A549 (cell line): ENCODE measurements at regions of chr2 and their contacts with region 1.

Region 1: GRCh38 chr2:74391580-74392448 is 11.7 kb upstream of the DCTN1 start:
- DNase-seq: peak; percentile 87 to 95
- ATAC-seq: peak; percentile 88 to 92
- H3K4me3 ChIP-seq: peak overlapping the region; percentile 72
- H3K27ac ChIP-seq: peak overlapping the region; percentile 85 to 93
- H3K4me1 ChIP-seq: peaks cover 24% of the 10 kb centered on the region
- CTCF ChIP-seq: peak; percentile 99
- EP300 ChIP-seq: no peak
- POLR2A ChIP-seq: peak; percentile 78
- RAD21 ChIP-seq: peak; percentile 48 to 61; a peak in 4 of 5 replicates

Region 2: DNA sequence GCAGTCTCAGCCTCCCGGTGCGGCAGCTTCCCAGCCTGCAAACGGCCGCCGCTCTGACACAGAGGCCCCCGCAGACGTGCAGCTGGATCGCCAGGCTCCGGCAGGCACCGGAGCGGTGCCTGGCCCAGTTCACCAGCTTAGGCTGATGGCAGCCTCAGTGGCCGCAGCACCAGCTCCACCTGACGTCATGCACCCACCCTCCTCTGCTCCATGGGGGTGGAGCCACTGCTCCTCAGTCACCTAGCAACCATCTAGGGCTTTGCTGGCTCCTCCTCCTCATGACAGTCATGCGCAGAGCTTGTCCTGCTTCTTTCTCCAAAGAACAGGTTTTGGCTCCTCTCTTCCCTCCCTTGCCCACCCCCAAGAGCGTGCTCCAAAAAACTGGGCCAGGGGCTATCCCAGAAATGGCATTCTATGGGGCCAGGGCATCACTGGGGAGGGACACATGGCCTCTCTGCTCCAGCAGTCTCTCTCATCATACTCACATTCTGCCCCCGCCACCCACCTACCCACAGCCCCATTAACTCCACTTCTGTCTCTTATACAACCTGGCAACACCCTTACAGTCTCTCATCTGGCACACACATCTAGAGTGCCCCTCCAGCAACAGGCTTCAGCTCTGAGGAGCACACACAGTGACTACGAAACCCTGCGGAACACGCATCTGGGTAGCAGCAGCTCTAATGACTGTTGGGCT is 17.2 kb before region 1 on chr2:
- CTCF ChIA-PET with region 1: interaction called, 14 read pairs
- POLR2A ChIA-PET with region 1: no interaction called
- DNase-seq: peak in 1 of 2 experiments; percentile 7
- ATAC-seq: peak in 1 of 2 experiments; percentile 64; a peak in 3 of 6 replicates
- H3K4me3 ChIP-seq: no peak overlapping the region
- H3K27ac ChIP-seq: no peak overlapping the region
- H3K4me1 ChIP-seq: peaks cover 4% of the 10 kb centered on the region; the same call in 1 of the 3 replicates
- CTCF ChIP-seq: no peak
- EP300 ChIP-seq: no peak
- POLR2A ChIP-seq: no peak
- RAD21 ChIP-seq: no peak

Region 3: GRCh38 chr2:74379851-74380789 is 11.7 kb before region 1 on chr2 and contains the start of gene DCTN1:
- CTCF ChIA-PET with region 1: interaction called, 18 read pairs
- POLR2A ChIA-PET with region 1: no interaction called
- DNase-seq: peak; percentile 26 to 35
- ATAC-seq: peak; percentile 75 to 92
- H3K4me3 ChIP-seq: no peak within 1 kb of the TSS
- H3K27ac ChIP-seq: peak within 1 kb of the TSS in 1 of 2 experiments; percentile 61; a peak in 2 of 6 replicates
- H3K4me1 ChIP-seq: peaks cover 21% of the 10 kb centered on the region; the same call in 2 of the 3 replicates
- CTCF ChIP-seq: no peak
- EP300 ChIP-seq: no peak
- POLR2A ChIP-seq: no peak
- RAD21 ChIP-seq: no peak
- polyA plus RNA-seq, gene DCTN1: 95.1 and 99.1 TPM in 2 replicates

Region 4: DNA sequence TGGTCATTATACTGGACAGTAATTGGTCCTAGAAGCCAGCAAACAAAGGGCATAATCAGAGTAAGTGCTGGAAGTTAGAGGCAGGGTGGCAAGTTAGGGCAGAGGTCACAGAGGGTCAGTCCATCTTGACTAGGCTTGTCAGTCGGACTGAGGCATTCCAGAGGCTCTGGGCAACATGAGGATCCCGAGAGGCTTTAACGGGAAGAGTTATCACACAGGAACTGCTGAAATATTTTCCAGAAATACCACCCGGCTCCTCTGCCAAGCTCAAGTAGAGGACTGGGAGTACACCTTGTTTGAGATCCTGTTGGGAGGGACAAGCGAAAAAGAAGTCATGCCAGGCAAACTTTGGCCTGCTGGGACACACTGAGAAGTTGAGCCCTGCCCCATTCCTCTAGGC is 15.9 kb after region 1 on chr2:
- CTCF ChIA-PET with region 1: interaction called, 39 read pairs
- POLR2A ChIA-PET with region 1: no interaction called
- DNase-seq: no peak
- ATAC-seq: no peak
- H3K4me3 ChIP-seq: no peak overlapping the region
- H3K27ac ChIP-seq: no peak overlapping the region
- H3K4me1 ChIP-seq: 0 out of 3 replicates have a peak, but pooled peaks cover 3% of the 10 kb centered on the region
- CTCF ChIP-seq: no peak
- EP300 ChIP-seq: no peak
- POLR2A ChIP-seq: no peak
- RAD21 ChIP-seq: no peak

Region 5: GRCh38 chr2:74414881-74415761 is 23.3 kb after region 1 on chr2:
- CTCF ChIA-PET with region 1: interaction called, 16 read pairs
- POLR2A ChIA-PET with region 1: no interaction called
- DNase-seq: no peak
- ATAC-seq: no peak
- H3K4me3 ChIP-seq: no peak overlapping the region
- H3K27ac ChIP-seq: no peak overlapping the region
- H3K4me1 ChIP-seq: no peaks in the 10 kb centered on the region; the same call in 2 of the 3 replicates
- CTCF ChIP-seq: no peak
- EP300 ChIP-seq: no peak
- POLR2A ChIP-seq: no peak
- RAD21 ChIP-seq: no peak

Region 6: DNA sequence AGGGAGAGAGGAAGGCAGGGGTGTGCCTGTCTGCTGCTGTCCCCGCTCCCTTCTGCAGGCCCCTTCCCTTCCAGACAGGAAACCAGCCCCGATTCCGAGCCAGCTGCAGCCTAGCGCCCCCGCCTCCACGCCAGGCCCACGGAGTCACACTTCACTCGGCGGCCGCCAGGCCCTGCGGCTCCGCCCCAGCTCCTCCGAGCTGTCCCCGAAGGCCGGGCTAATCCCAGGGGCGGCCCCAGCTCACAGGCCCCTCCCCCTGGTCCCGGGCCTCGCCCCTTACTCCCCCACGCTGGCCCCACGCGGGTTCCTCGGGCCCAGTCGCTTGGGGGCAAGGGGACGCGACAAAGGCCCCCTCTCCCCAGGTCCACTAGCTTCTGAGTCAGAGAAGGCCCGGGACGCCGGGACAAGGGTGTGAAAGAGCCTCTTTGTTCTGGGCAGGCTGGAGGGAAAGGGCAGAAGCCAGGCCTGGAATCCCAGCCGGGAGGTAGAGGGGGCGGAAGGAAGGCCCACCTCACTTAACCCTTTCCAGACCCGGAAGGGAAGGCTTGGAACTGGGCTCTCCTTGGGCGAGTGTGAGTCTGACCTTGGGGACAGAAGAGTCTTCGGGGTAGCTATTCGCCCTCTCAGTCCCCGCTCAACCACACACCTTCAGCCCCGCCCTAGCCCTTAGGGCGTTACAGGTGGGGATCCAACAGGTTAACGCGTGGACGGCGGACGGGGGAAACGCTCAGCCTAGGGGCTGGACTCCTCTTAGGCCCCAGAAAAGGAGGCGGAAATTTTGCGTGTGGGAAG is 48.8 kb after region 1 on chr2:
- CTCF ChIA-PET with region 1: interaction called, 15 read pairs
- POLR2A ChIA-PET with region 1: interaction called, 5 read pairs
- DNase-seq: peak; percentile 85 to 100
- ATAC-seq: peak; percentile 96 to 99
- H3K4me3 ChIP-seq: peak overlapping the region; percentile 53
- H3K27ac ChIP-seq: peak overlapping the region; percentile 86 to 89
- H3K4me1 ChIP-seq: peaks cover 34% of the 10 kb centered on the region
- CTCF ChIP-seq: no peak
- EP300 ChIP-seq: no peak
- POLR2A ChIP-seq: peak; percentile 94
- RAD21 ChIP-seq: no peak

Region 7: DNA sequence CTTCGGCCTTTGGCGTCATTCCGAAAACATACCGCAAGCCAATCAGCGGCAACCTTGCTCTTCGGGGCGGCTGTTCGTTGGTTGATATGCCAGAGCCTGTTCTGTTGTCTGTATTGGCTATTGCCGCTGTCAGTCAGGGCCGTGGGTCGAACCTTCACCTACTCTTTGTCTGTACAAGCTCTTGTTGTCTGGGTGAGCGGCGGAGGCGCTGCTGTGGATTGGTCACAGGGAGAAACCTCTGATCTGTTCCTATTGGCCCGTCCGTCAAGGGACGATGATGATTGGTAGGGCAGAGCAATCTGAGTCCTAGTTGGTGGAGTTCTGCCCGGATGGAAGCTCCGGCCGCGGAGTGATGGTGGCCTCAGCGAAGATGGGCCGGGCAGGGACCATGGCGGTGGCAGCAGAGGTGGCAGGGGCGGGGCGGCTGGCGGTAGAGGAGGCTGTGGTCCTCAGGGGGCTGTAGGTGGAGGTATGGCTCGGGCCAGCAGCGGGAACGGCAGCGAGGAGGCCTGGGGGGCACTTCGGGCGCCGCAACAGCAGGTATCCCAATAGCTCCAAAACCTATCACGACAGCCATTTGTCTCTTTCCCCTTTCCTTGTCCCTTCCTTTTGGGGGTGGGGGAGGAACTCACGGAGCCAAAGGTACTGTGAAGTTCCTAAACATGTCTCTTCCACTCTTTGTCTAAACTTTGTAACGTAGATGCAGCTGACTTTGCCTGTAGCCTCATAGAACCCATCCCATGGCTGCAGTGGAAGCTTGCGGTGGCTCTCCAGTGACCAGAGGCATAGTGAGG is 66.5 kb after region 1 on chr2 and contains the start of gene WBP1:
- CTCF ChIA-PET with region 1: interaction called, 20 read pairs
- POLR2A ChIA-PET with region 1: no interaction called
- DNase-seq: peak; percentile 99 to 100
- ATAC-seq: peak; percentile 80 to 92
- H3K4me3 ChIP-seq: peak within 1 kb of the TSS; percentile 70
- H3K27ac ChIP-seq: peak within 1 kb of the TSS; percentile 87 to 92
- H3K4me1 ChIP-seq: peaks cover 25% of the 10 kb centered on the region
- CTCF ChIP-seq: no peak
- EP300 ChIP-seq: no peak
- POLR2A ChIP-seq: peak; percentile 49
- RAD21 ChIP-seq: no peak
- polyA plus RNA-seq, gene WBP1: 62.6 and 86.3 TPM in 2 replicates